H1 (cell line): ENCODE measurements at regions of chr10 and their contacts with region 1.

Region 1: GRCh38 chr10:44990302-44990655 is 10.4 kb upstream of the ZNF22 start:
- DNase-seq: peak; percentile 64 to 69
- H3K4me3 ChIP-seq: peak overlapping the region in 2 of 4 experiments; percentile 14 to 16; a peak in 2 of 8 replicates
- H3K27ac ChIP-seq: no peak overlapping the region; the same call in 1 of the 2 replicates
- H3K4me1 ChIP-seq: peaks cover 9 to 43% (median 26%) of the 10 kb centered on the region in 4 experiments; a peak in 6 of 7 replicates
- H3K27me3 ChIP-seq: peaks cover 0 to 3% (median 1%) of the 10 kb centered on the region in 4 experiments; a peak in 4 of 7 replicates
- CTCF ChIP-seq: peak; percentile 78 to 87 (median 82)
- EP300 ChIP-seq: no peak
- POLR2A ChIP-seq: no peak
- RAD21 ChIP-seq: peak; percentile 60 to 73

Region 2: DNA sequence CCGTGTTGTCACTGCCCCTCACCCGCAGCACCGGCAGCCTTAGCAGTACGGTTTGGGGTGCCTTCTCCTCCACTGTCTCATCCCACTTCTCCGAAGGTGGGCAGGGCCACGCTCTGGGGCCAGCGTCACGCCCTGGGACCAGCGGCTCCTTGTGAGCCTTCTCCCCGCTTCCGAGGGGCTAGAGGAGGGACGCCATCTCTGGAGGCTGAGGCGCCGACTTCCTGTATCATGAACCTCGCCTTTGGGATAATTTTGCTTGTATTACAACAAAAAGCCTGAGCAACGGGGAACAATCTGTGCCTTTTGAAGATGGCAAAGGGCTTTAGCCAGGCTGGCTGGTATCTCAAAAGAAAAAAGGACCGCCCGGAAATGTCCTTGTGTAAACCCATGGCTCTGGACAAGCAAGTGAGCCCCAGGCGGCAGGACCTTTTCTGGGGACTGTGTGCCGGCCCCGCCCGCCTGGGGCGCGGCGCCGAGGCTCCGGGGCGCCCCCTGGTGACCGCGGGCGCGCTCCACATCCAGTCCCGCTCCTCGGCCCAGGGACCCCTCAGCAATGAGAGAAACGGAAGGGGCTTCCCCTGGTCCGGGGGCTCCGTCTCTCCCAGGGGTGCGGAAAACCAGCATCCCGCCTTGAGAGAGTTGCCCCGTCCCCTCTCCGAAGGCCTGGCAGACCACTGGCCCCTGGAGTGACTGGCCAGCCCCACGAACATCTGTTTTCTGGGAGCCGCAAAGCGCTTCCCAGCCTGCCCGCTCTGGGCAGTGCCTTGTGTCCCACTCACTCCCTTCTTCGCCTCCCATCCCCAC is 15.4 kb before region 1 on chr10:
- CTCF ChIA-PET with region 1: interaction called, 84 read pairs
- POLR2A ChIA-PET with region 1: interaction called, 11 read pairs
- DNase-seq: peak in 1 of 2 experiments; percentile 88
- H3K4me3 ChIP-seq: peak overlapping the region; percentile 32 to 64 (median 46)
- H3K27ac ChIP-seq: no peak overlapping the region; the same call in 1 of the 2 replicates
- H3K4me1 ChIP-seq: peaks cover 25 to 51% (median 36%) of the 10 kb centered on the region in 4 experiments
- H3K27me3 ChIP-seq: no peaks in the 10 kb centered on the region; a peak in 1 of 7 replicates
- CTCF ChIP-seq: peak; percentile 70 to 87 (median 77)
- EP300 ChIP-seq: no peak
- POLR2A ChIP-seq: no peak
- RAD21 ChIP-seq: peak; percentile 53 to 77

Region 3: DNA sequence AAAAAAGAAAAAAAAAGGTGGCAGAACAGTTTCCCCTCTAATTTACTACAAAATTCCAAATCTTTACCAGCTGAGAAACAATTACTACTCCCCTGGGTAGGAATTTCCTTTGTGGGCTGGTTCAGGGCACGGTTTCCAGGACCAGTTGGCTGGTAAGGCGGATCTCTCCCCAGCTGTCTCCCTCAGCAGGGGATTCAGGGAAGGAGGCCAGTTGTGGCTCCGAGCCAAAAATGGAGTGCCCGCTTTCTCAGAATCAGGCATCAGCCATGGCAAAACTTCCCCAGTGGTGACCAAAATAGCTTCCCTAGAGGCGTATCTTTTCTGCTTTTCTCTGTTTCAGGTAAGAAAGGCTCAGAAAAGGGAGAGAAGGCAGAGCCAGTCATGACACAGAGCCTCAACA is 101.7 kb after region 1 on chr10:
- CTCF ChIA-PET with region 1: no interaction called
- POLR2A ChIA-PET with region 1: no interaction called
- DNase-seq: no peak
- H3K4me3 ChIP-seq: no peak overlapping the region
- H3K27ac ChIP-seq: no peak overlapping the region
- H3K4me1 ChIP-seq: peaks cover 3 to 12% (median 9%) of the 10 kb centered on the region in 4 experiments; a peak in 6 of 7 replicates
- H3K27me3 ChIP-seq: no peaks in the 10 kb centered on the region
- CTCF ChIP-seq: no peak
- EP300 ChIP-seq: no peak
- POLR2A ChIP-seq: no peak
- RAD21 ChIP-seq: no peak